Mammary epithelial cell (primary cell): ENCODE measurements at regions of chr20 and their contacts with region 1.

Region 1: GRCh38 chr20:3224681-3225421 is 14.1 kb downstream of the SLC4A11 start:
- DNase-seq: no peak
- H3K4me3 ChIP-seq: no peak overlapping the region
- H3K27ac ChIP-seq: no peak overlapping the region
- H3K4me1 ChIP-seq: peaks cover 12% of the 10 kb centered on the region
- H3K27me3 ChIP-seq: no peaks in the 10 kb centered on the region
- CTCF ChIP-seq: no peak

Region 2: GRCh38 chr20:3014662-3015061 is 210.2 kb before region 1 on chr20:
- CTCF ChIA-PET with region 1: no interaction called
- dilution Hi-C with region 1: no loop called
- in situ Hi-C with region 1: no loop called
- intact Hi-C with region 1: no loop called
- DNase-seq: no peak
- H3K4me3 ChIP-seq: no peak overlapping the region
- H3K27ac ChIP-seq: no peak overlapping the region
- H3K4me1 ChIP-seq: peaks cover 9% of the 10 kb centered on the region
- H3K27me3 ChIP-seq: no peaks in the 10 kb centered on the region
- CTCF ChIP-seq: no peak

Region 3: GRCh38 chr20:3239026-3239866 is 14.4 kb after region 1 on chr20 and contains the start of gene SLC4A11:
- CTCF ChIA-PET with region 1: no interaction called
- dilution Hi-C with region 1: no loop called
- in situ Hi-C with region 1: no loop called
- intact Hi-C with region 1: loop called (anchors 2 kb)
- DNase-seq: peak; percentile 87
- H3K4me3 ChIP-seq: peak within 1 kb of the TSS; percentile 82 to 98 (median 97)
- H3K27ac ChIP-seq: peak within 1 kb of the TSS; percentile 52
- H3K4me1 ChIP-seq: peaks cover 31% of the 10 kb centered on the region
- H3K27me3 ChIP-seq: no peaks in the 10 kb centered on the region
- CTCF ChIP-seq: no peak
- total RNA-seq, gene SLC4A11: 6.7 to 20.1 TPM